A673 (cell line): ENCODE measurements at regions of chr12 and their contacts with region 1.

Region 1: DNA sequence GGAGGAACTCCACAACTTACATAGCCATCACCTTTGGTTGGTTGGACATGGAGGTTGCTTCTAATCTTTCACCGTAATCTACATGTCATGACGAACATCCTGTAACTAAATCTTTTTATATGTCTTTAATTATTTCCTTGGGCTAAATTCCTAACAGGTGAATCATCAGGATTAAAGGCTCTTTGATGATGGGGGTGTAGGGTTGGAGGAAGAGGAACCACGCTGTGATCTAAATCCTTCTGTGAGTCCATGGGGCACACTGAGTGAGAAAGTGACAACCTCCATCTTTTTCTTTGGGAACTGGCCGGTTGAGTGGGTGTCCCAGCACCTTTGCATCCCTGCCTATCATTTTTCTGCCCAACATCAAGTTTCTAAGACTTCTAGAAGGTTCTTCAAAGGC is 31.1 kb upstream of the MAP1LC3B2 start:
- DNase-seq: peak; percentile 87
- H3K4me3 ChIP-seq: no peak overlapping the region
- H3K27ac ChIP-seq: peak overlapping the region; percentile 66
- H3K4me1 ChIP-seq: peaks cover 33% of the 10 kb centered on the region
- H3K27me3 ChIP-seq: no peaks in the 10 kb centered on the region
- CTCF ChIP-seq: no peak

Region 2: DNA sequence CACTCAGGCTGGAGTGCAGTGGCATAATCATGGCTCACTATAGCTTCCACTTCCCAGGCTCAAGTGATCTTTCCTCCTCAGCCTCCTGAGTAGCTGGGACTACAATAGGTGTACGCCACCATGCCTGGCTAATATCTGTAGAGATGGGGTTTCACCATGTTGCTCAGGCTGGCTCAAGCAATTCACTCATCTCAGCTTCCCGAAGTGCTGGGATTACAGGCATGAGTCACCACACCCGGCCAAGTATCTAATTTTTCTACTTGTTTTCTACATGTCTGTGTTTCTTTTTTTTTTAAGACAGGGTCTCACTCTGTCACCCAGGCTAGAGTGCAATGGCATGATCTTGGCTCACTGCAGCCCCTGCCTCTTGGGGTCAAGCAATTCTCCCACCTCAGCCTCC is 130.9 kb before region 1 on chr12:
- CTCF ChIA-PET with region 1: no interaction called
- POLR2A ChIA-PET with region 1: no interaction called
- intact Hi-C with region 1: no loop called
- DNase-seq: no peak
- H3K4me3 ChIP-seq: no peak overlapping the region
- H3K27ac ChIP-seq: no peak overlapping the region
- H3K4me1 ChIP-seq: no peaks in the 10 kb centered on the region
- H3K27me3 ChIP-seq: no peaks in the 10 kb centered on the region
- CTCF ChIP-seq: no peak

Region 3: GRCh38 chr12:116508145-116509121 is 19.6 kb before region 1 on chr12:
- CTCF ChIA-PET with region 1: no interaction called
- POLR2A ChIA-PET with region 1: interaction called, 11 read pairs
- intact Hi-C with region 1: no loop called
- DNase-seq: peak; percentile 46
- H3K4me3 ChIP-seq: peak overlapping the region; percentile 45
- H3K27ac ChIP-seq: no peak overlapping the region
- H3K4me1 ChIP-seq: peaks cover 4% of the 10 kb centered on the region
- H3K27me3 ChIP-seq: no peaks in the 10 kb centered on the region
- CTCF ChIP-seq: no peak

Region 4: GRCh38 chr12:117563007-117563406 is 1034.9 kb after region 1 on chr12:
- CTCF ChIA-PET with region 1: no interaction called
- POLR2A ChIA-PET with region 1: no interaction called
- intact Hi-C with region 1: no loop called
- DNase-seq: no peak
- H3K4me3 ChIP-seq: no peak overlapping the region
- H3K27ac ChIP-seq: no peak overlapping the region
- H3K4me1 ChIP-seq: no peaks in the 10 kb centered on the region
- H3K27me3 ChIP-seq: no peaks in the 10 kb centered on the region
- CTCF ChIP-seq: no peak